AG04450 (cell line): ENCODE measurements at regions of chr6 and their contacts with region 1.

Region 1: DNA sequence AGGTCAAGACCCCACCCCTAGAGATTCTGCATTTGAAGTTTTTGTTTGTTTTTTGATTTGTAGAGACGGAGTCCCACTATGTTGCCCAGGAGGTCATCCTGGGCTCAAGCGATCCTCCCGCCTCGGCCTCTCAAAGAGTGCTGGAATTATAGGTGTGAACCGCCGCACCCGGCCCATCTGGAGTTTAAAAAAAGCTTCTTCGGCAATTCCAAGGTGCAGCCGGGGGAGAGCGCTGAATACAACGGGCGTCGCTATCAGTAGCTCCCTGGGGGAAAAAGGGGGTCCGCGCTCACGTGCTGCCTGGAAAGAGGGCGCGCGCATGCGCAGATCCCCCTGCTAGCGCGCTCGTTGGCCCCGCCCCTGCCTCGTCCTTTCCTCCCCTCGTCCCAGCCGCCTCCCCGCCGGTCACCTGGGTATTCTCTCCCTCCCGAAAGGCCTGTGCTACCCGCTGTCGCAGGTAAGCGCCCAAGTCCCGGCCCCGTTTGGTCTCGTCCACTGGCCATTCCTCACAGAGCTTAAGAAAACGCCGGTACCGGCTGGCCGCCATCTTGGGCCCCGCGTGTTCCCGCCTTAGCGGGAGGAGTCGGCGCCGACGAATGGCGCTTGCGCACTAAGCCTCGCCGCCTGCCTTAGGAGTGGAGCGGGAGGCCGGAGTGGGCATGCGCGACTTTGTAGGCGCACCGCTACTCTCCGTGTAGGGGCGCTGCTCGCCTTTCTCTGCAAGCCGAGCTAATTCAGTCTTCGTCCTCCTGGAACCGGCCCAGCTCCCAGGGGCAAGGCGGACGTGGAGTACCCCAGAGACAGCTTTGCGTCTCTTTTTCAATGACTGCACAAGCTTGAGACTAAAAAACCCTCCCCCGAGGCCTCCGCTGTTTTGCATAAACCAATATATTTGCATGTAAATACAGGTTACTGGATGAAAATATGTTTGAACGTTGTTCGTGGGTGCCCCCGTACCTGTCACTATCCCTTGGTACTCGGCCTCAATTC is at the start of gene UQCC2:
- DNase-seq: peak; percentile 93
- H3K4me3 ChIP-seq: peak within 1 kb of the TSS; percentile 95
- H3K27ac ChIP-seq: peak within 1 kb of the TSS; percentile 84
- H3K27me3 ChIP-seq: peaks cover 8% of the 10 kb centered on the region
- CTCF ChIP-seq: peak; percentile 73
- polyA plus RNA-seq, gene UQCC2: 67.9 and 84.1 TPM in 2 replicates

Region 2: DNA sequence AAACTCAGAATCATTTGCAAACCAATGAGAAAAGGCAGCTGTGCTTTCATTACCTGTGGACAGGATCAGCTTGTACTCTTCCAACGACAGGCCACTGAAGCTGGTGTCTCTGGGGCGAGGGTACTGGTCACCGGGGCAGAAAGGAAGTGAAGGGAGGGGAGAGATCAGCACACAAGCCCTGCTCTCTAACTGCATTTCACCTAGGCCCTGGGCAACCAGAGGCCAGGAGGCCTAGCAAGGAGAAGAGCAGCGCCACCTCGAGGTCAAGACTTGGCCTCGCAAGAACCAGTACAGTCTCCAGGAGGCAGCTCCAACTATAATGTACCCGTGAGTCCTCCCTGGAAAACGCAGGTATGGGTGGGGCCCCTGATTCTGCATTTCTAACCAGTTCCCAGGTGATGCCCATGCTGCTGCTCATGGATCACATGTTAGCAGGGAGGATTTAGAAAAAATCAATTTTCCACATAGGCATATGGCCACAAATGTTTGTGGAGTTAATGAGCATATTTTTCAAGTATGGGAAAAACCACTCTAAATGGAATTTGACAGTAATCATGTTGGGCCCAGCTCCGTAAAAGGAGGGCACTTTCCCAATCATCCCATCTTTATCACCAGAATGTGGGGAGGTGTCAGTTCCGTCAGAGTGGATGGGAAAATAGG is 10.9 kb before region 1 on chr6:
- CTCF ChIA-PET with region 1: interaction called, 25 read pairs
- POLR2A ChIA-PET with region 1: interaction called, 7 read pairs
- DNase-seq: peak; percentile 26
- H3K4me3 ChIP-seq: no peak overlapping the region
- H3K27ac ChIP-seq: no peak overlapping the region
- H3K27me3 ChIP-seq: no peaks in the 10 kb centered on the region
- CTCF ChIP-seq: peak; percentile 73

Region 3: DNA sequence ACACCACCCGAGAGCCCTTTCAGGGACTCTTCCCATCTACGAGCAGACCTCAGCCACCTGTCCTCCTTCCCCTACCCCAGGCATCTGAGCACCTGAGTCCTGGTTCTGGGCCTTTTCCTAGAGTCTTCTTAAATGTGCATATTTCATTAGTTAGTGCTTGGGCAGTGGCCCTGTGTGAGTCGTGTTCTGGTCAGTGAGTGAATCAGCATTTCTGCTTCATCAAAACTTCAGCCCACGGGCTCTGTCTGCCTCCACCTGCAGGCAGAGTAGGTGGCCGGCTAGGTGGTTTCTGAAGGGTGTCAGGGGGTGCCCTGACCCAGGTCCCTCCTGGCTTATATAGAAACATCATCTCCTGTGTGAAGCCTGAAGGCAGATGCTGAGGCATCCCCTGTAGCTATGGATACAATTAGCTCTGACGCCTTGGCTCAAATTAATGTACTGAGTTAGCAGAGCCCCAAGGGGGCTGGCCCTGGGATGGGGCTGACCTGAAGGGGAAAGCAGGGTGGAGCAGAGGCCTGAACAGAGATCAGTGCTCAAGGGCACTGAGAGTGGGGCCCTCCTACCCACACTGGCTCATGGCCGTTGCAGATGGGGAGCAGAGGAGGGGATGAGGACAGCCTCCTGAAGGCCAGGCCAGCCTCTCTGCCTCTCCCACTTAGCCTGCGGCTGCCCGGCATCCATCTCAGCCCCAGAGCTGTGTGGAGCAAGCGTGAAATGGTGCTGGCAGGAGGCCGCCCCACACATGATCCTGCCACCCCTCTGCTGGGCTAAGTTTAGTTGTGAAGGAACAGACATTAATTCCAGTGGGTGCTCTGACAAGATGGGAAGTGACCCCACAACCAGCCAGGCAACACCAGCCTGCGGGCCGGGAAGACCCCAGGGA is 21.6 kb after region 1 on chr6:
- CTCF ChIA-PET with region 1: no interaction called
- POLR2A ChIA-PET with region 1: no interaction called
- DNase-seq: no peak
- H3K4me3 ChIP-seq: no peak overlapping the region
- H3K27ac ChIP-seq: no peak overlapping the region
- H3K27me3 ChIP-seq: peaks cover 4% of the 10 kb centered on the region
- CTCF ChIP-seq: no peak

Region 4: GRCh38 chr6:33744001-33744848 is 32.8 kb after region 1 on chr6:
- CTCF ChIA-PET with region 1: interaction called, 31 read pairs
- POLR2A ChIA-PET with region 1: interaction called, 3 read pairs
- DNase-seq: no peak
- H3K4me3 ChIP-seq: no peak overlapping the region
- H3K27ac ChIP-seq: no peak overlapping the region
- H3K27me3 ChIP-seq: peaks cover 22% of the 10 kb centered on the region
- CTCF ChIP-seq: peak; percentile 96

Region 5: GRCh38 chr6:33771146-33772081 is 60.0 kb after region 1 on chr6:
- CTCF ChIA-PET with region 1: interaction called, 21 read pairs
- POLR2A ChIA-PET with region 1: interaction called, 12 read pairs
- DNase-seq: peak; percentile 93
- H3K4me3 ChIP-seq: peak overlapping the region; percentile 27
- H3K27ac ChIP-seq: peak overlapping the region; percentile 98
- H3K27me3 ChIP-seq: no peaks in the 10 kb centered on the region
- CTCF ChIP-seq: peak; percentile 82

Region 6: GRCh38 chr6:34027445-34027936 is 316.1 kb after region 1 on chr6:
- CTCF ChIA-PET with region 1: interaction called, 13 read pairs
- POLR2A ChIA-PET with region 1: interaction called, 3 read pairs
- DNase-seq: no peak
- H3K4me3 ChIP-seq: no peak overlapping the region
- H3K27ac ChIP-seq: no peak overlapping the region
- H3K27me3 ChIP-seq: peaks cover 33% of the 10 kb centered on the region
- CTCF ChIP-seq: peak; percentile 75

Region 7: GRCh38 chr6:34154668-34155447 is 443.4 kb after region 1 on chr6:
- CTCF ChIA-PET with region 1: interaction called, 51 read pairs
- POLR2A ChIA-PET with region 1: interaction called, 4 read pairs
- DNase-seq: no peak
- H3K4me3 ChIP-seq: peak overlapping the region; percentile 42
- H3K27ac ChIP-seq: no peak overlapping the region
- H3K27me3 ChIP-seq: peaks cover 49% of the 10 kb centered on the region
- CTCF ChIP-seq: peak; percentile 89